Cardiac septum (tissue), 1 donor: ENCODE measurements at regions of chr5 and their contacts with region 1.

Region 1: GRCh38 chr5:173498286-173498685 is 118.2 kb downstream of the BOD1 start:
- DNase-seq: no peak

Region 2: DNA sequence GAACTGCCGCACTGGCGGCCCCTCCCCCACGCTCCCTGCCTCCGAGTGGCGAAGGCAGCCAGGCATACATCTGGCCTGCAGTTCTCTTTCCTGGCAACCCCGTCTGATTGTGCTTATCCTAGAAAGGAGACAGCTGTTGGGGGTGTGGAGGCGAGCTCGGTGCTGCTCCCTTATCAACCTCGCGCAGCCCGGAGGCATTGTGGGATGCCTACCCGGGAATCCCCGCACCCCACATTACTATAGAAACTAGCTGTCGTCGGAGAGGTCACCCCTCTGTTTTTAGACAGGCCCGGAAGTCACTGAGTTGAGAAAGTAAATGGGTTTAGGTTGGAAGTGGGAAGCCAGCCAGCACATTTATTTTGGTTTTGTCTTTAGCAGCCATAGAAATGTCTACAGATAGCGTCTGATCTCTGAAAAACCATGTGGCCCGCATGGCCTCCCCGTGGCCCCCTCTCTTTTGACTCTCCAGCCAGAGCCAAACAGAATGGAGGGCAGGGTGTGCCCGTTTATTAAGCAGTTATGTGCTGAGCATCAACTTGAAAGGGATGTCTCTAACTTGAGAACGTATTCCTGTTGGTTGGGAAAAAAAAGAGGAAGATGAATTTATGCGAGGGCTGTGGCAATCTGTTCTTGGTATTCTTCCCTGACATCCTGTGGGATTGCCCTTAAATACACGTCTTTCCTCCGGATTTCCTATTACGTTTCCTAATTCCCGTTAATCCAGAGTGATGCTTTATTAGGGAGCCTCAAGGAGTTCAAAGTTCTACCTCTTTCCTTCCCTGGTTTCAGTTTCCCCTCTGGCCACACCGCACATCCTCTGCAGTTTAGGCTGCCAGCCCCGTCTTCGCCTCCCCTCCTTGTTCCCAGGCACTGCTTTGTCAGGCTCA is 173.9 kb before region 1 on chr5:
- intact Hi-C with region 1: loop called (anchors 5 kb)
- DNase-seq: peak; percentile 81

Region 3: DNA sequence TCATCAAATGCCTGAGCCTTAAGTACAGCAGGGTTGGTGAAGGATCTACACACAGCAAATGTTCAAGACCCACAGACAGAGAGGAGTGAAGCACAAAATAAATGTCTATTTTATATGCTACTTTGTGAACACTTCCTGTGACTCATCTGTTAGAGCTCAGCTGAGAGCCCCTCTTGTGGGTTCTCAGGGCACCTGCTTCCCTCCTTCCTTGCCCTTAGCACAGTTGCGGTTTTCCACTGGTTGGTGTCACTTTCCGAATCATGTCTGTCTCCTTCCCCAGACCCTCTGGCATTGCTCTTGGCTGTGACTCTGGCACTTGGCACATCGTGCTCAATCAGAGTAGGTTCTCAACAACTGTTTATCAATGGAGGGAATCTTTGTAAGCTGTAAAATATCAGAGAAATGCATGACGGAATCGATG is 41.5 kb before region 1 on chr5:
- intact Hi-C with region 1: loop called (anchors 2 kb)
- DNase-seq: no peak

Region 4: DNA sequence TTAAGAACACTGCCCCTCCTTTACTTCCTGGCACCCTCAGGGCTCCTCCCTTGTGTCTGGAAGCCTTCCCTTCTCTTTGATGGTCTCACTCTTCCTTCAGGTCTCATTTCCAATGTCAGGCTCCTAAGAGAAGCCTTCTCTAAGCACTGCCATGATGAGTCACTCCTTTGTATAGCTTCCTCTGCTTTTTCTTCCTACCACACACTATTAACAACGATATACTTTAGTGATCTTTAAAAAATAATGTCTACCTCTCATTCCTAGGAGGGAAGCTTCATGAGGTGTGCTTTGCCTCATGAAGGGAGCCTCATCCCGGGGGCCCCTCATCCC is 38.0 kb after region 1 on chr5:
- intact Hi-C with region 1: loop called (anchors 5 kb)
- DNase-seq: no peak